ENCODE measurements at regions of chr15 and their contacts with region 1.

Region 1: DNA sequence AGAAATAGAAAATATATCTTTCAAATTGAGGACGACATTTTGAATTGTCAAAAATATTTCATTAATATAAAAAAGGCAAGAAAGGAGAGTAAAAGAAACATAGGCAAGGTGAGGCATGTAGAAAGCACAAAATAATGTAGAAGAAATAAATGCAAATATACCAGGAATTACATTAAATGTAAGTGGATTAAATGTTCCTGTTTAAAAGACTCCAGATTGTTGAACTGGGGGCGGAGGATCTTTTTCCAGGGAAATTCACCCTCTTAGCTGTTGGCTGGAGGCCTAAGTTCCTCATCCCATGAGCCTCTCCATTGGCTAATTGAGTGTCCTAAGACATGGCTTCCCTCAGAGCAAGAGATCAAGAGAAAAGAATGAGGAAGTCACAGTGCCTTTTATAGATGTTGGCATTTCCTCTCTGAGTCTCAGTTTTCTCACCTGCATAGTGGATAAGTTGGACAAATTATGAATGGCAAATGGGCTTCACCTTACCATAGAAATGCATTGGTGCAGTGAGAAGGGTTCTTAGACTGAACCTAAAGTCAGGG is 147.4 kb upstream of the SMAD3 start:
- DNase-seq: no peak
- ATAC-seq: no peak
- H3K4me3 ChIP-seq: no peak overlapping the region
- H3K27ac ChIP-seq: no peak overlapping the region
- H3K4me1 ChIP-seq: no peaks in the 10 kb centered on the region; a peak in 1 of 5 replicates
- H3K27me3 ChIP-seq: peaks cover 0 to 20% of the 10 kb centered on the region in 2 experiments; a peak in 3 of 5 replicates
- CTCF ChIP-seq: no peak
- EP300 ChIP-seq: no peak
- POLR2A ChIP-seq: no peak
- RAD21 ChIP-seq: no peak

Region 2: GRCh38 chr15:65530314-65531122 is 1387.5 kb before region 1 on chr15 and contains the start of gene HACD3:
- CTCF ChIA-PET with region 1: no interaction called
- POLR2A ChIA-PET with region 1: no interaction called
- in situ Hi-C with region 1: no loop called
- intact Hi-C with region 1: no loop called
- DNase-seq: peak; percentile 94 to 98 (median 98)
- ATAC-seq: peak; percentile 93
- H3K4me3 ChIP-seq: peak within 1 kb of the TSS; percentile 92
- H3K27ac ChIP-seq: peak within 1 kb of the TSS; percentile 96
- H3K4me1 ChIP-seq: peaks cover 21 to 29% of the 10 kb centered on the region in 2 experiments; a peak in 4 of 5 replicates
- H3K27me3 ChIP-seq: no peaks in the 10 kb centered on the region
- CTCF ChIP-seq: no peak
- EP300 ChIP-seq: no peak
- POLR2A ChIP-seq: peak; percentile 86
- RAD21 ChIP-seq: no peak
- polyA plus RNA-seq, gene HACD3: 48.1 to 59.6 TPM

Region 3: DNA sequence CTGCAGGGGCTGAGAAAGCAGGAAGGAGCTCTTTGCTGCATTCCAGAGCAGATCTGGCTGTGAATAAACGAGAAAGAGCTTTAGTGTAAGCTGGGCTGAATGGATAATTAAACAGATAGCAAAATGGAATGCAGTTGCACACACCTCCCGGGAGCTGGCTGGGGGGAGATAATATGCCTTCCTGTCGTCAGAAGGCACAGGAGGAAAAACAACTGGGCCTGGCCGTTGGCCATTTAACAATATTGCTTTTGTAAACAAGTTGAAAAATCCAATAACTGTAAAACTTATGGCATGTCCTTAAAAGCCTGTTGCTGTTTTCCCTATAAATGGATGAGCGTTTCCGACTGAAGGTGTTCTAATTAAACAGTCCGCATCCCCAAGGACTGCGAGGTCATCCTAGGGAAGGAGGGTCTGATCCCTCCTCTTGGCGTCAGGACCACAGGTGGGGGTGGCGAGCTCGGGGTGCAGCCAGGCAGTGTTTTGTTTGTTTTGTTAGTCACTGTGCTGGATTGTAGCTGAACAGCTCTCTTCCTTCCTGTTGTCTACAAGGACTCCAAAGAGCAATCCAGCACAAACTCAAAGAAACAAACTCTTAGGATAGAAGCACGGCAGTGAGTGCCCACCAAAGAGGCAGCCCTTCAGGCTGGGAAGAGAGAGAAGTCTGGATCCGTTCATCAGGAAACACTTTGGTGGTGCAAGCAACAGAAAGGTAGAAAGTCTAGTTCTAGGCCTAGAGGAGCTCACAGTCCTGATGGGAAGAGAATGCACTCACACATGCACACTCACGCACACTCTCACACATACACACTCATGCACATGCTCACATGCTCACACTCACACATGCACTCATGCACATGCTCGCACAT is 14.0 kb after region 1 on chr15:
- CTCF ChIA-PET with region 1: no interaction called
- POLR2A ChIA-PET with region 1: interaction called, 4 read pairs
- in situ Hi-C with region 1: no loop called
- intact Hi-C with region 1: loop called (anchors 1 kb)
- DNase-seq: peak in 2 of 4 experiments; percentile 57 to 59
- ATAC-seq: peak; percentile 81
- H3K4me3 ChIP-seq: no peak overlapping the region
- H3K27ac ChIP-seq: peak overlapping the region; percentile 69
- H3K4me1 ChIP-seq: peaks cover 30% of the 10 kb centered on the region in 2 experiments
- H3K27me3 ChIP-seq: no peaks in the 10 kb centered on the region
- CTCF ChIP-seq: no peak
- EP300 ChIP-seq: peak; percentile 65; the same call in 1 of the 2 replicates
- POLR2A ChIP-seq: no peak
- RAD21 ChIP-seq: no peak

Measured in K562 (cell line).